ENCODE measurements at regions of chr10 and their contacts with region 1.

Region 1: DNA sequence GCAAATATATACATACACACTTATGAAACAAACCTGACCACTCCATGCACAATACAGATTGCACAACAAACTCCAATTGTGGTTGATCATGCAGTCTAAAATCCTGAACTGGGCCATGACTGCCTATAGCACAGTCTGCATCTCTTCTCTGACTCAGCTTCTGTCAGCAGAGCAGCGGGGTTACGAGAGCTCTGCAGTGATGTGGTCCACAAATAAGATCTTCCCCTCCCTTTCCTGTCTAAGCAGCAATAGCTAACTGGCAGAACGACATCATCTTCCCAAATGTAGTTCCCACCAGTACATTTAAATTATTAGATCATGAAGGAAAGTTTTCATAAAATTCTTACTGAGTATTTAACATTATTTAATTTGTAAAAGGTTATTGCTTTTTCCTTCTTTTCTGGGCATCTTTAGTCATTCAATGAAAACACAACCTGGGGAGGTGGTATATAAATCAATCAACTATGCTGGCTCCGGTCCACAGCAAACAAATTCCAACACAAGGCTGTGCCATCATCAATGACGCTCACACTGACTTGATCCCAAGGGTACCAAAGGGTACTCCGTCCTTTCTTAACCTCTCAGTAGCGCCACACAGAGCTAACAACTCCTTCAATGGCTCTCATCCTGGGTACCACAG is 17.1 kb downstream of the ARHGAP21 start:
- DNase-seq: peak; percentile 58
- H3K4me3 Mint-ChIP-seq: no peak overlapping the region
- H3K27ac Mint-ChIP-seq: no peak overlapping the region
- H3K4me1 Mint-ChIP-seq: peaks cover 5% of the 10 kb centered on the region
- H3K27me3 Mint-ChIP-seq: peaks cover 2% of the 10 kb centered on the region

Region 2: GRCh38 chr10:24597426-24597825 is 109.2 kb before region 1 on chr10:
- CTCF ChIA-PET with region 1: no interaction called
- intact Hi-C with region 1: no loop called
- DNase-seq: no peak
- H3K4me3 Mint-ChIP-seq: no peak overlapping the region
- H3K27ac Mint-ChIP-seq: no peak overlapping the region
- H3K4me1 Mint-ChIP-seq: peaks cover 7% of the 10 kb centered on the region
- H3K27me3 Mint-ChIP-seq: no peaks in the 10 kb centered on the region

Region 3: DNA sequence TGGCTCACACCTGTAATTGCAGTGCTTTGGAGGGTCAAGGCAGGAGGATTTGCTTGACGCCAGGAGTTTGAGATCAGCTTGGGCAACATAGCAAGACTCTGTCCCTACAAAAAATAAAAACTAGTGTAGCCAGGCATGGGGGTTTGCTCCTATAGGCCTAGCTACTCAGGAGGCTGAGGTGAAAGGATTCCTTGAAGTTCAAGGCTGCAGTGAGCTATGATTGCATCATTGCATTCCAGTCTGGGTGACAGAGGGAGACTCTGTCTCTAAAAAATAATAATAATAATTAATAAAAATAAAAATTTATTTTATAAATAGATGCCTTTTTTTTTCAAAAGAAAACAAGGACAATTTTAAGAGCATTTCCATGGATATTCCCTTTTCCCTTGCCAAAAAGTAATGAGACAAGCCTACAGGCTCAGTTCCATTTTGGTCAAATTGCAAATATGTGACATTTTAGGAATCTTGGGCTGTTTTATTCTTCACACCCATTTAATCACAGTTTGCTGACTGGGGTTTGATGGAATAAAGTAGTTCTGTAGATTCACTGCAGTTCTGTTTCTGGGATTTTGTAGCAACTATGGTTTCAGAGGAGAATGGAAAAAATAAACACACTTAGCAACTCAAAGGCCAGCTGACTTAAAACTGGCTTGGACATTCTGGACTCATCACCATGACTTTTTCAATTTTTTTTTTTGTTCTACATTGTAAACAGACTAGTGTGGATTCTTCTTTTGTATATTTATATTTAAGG is 65.5 kb after region 1 on chr10:
- CTCF ChIA-PET with region 1: no interaction called
- intact Hi-C with region 1: no loop called
- DNase-seq: no peak
- H3K4me3 Mint-ChIP-seq: no peak overlapping the region
- H3K27ac Mint-ChIP-seq: no peak overlapping the region
- H3K4me1 Mint-ChIP-seq: peaks cover 14% of the 10 kb centered on the region
- H3K27me3 Mint-ChIP-seq: no peaks in the 10 kb centered on the region

Region 4: DNA sequence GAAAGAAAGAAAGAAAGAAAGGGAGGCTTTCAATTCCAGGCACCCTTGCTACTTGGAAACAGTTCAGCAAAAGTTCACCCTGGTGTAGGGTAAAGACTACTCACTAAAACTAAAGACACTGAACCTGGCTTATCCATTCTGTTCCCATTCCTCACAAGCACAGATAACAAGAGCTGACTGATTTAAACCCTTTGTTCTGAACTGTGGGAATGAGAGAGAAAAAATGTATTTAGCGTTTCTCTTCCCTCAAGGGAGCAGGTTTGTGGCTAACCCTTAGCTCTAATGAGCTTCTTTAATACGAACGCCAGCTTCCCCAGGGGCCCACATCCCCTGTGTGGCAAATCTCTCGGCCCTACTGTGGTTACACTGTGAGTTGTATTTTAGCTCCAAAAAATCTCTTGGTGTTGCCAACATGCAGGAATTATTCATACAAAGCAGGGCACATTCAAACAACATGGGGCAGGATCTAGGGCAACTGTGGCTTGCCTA is 222.5 kb after region 1 on chr10:
- CTCF ChIA-PET with region 1: no interaction called
- intact Hi-C with region 1: no loop called
- DNase-seq: no peak
- H3K4me3 Mint-ChIP-seq: no peak overlapping the region
- H3K27ac Mint-ChIP-seq: no peak overlapping the region
- H3K4me1 Mint-ChIP-seq: peaks cover 16% of the 10 kb centered on the region
- H3K27me3 Mint-ChIP-seq: no peaks in the 10 kb centered on the region

Region 5: GRCh38 chr10:25059764-25060389 is 353.3 kb after region 1 on chr10:
- CTCF ChIA-PET with region 1: no interaction called
- intact Hi-C with region 1: loop called (anchors 5 kb)
- DNase-seq: no peak
- H3K4me3 Mint-ChIP-seq: no peak overlapping the region
- H3K27ac Mint-ChIP-seq: no peak overlapping the region
- H3K4me1 Mint-ChIP-seq: peaks cover 18% of the 10 kb centered on the region
- H3K27me3 Mint-ChIP-seq: no peaks in the 10 kb centered on the region